Activated CD4-positive, alpha-beta T cell treated with anti-CD3 and anti-CD28 coated beads, Interleukin-2, amount 10 ng/mL, durations not matched to agents 24 days and 14 days (primary cell): ENCODE measurements at regions of chr6 and their contacts with region 1.

Region 1: GRCh38 chr6:105179244-105180065 is at the start of gene POPDC3:
- DNase-seq: no peak
- H3K4me3 Mint-ChIP-seq: peak within 1 kb of the TSS; percentile 72
- H3K27ac Mint-ChIP-seq: no peak within 1 kb of the TSS
- H3K4me1 Mint-ChIP-seq: peaks cover 2% of the 10 kb centered on the region
- H3K27me3 Mint-ChIP-seq: peaks cover 63% of the 10 kb centered on the region
- total RNA-seq, gene POPDC3: not detected in 2 replicates

Region 2: DNA sequence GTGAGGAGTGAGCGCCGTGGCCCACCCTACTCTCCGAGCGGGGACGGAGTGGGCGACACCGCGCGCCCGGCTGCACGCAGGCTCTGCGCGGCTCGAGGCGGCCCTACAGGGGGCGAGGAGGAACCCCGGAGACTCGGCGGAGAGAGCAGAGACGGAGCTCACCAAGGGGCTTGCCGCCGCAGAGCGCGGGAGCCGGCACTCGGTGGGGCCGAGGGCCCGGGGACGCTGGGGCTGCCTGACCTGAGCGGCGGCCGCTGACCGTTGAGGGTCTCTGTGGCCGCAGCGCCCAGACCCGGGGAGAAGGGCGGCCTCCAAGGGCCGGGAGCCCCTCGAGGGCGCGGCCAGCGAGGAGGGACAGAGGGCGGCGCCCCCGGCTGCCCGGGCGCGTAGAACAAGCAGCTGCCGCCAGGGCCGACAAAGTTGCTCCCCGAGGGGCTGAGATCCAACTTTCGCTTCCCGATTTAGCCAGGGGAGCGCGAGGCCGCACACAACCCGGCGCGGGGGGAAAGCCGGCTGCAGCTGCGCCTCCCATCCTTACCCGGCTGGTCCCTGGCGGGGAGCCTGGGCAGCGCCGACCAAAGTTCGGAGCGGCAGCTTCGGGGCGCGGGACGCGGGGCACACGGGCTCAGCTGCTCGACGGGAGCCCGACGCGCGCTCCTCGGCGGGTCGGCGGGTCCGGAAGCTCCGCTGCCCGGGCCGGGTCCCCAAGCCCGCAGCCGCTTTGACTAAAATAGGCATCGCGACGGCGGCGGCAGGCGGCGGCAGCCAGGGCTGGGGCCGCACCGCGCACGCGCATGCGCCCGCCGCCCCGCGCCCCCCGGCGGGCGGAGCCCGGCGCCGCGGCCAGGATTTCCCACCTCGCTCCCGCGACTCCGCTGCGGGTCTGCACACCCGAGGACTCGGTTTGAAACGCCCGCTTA is 42.8 kb before region 1 on chr6:
- intact Hi-C with region 1: loop called (anchors 5 kb)
- DNase-seq: peak; percentile 70
- H3K4me3 Mint-ChIP-seq: peak overlapping the region; percentile 68
- H3K27ac Mint-ChIP-seq: no peak overlapping the region
- H3K4me1 Mint-ChIP-seq: peaks cover 4% of the 10 kb centered on the region
- H3K27me3 Mint-ChIP-seq: peaks cover 80% of the 10 kb centered on the region

Region 3: DNA sequence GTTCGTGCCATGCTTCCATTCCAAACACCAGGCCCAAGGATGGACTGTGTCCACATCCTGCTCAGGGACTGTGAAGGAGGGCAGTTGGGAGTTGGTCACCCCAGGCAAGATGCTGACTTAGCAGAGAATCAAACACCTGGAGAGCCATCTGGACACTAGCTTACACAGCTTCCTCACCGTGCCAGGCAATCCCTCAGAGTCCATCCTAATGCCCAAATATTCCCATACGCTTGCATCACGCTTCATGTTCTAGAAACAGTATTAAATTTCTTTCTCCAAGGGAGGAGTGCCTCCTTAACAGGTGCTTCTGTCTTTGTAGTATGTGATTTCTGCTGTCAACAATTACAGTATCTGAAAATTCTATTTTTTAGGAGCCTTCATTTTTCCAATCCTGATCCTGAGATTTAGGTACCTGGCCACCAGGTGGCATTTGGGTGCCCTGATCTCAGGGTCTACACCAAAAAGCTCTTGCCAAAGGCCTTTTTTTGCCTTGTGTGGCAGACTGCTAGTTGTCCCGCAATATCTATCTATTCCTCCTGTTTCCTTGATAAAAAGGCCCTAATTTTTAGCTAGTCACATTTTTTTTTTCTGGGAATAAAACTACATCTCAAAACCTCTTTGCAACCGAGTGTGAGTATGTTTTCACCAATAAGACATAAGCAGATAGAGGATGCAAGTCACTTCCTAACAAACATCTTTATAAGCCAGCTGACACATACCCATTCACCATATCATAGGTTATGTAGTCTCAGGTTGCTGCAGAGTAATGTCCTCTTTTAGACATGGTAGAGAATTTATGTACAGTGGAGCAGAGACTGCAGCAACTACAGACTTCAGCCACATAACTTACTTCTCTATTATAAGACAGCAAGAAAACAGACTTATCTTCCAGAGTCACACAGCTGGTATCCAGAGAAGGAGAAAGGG is 138.4 kb after region 1 on chr6:
- intact Hi-C with region 1: no loop called
- DNase-seq: no peak
- H3K4me3 Mint-ChIP-seq: no peak overlapping the region
- H3K27ac Mint-ChIP-seq: no peak overlapping the region
- H3K4me1 Mint-ChIP-seq: no peaks in the 10 kb centered on the region
- H3K27me3 Mint-ChIP-seq: no peaks in the 10 kb centered on the region

Region 4: GRCh38 chr6:106014930-106015329 is 835.5 kb after region 1 on chr6:
- intact Hi-C with region 1: no loop called
- DNase-seq: no peak
- H3K4me3 Mint-ChIP-seq: no peak overlapping the region
- H3K27ac Mint-ChIP-seq: no peak overlapping the region
- H3K4me1 Mint-ChIP-seq: peaks cover 2% of the 10 kb centered on the region
- H3K27me3 Mint-ChIP-seq: peaks cover 30% of the 10 kb centered on the region